Left lung (tissue), 14 donors: ENCODE measurements at regions of chr12 and their contacts with region 1.

Region 1: DNA sequence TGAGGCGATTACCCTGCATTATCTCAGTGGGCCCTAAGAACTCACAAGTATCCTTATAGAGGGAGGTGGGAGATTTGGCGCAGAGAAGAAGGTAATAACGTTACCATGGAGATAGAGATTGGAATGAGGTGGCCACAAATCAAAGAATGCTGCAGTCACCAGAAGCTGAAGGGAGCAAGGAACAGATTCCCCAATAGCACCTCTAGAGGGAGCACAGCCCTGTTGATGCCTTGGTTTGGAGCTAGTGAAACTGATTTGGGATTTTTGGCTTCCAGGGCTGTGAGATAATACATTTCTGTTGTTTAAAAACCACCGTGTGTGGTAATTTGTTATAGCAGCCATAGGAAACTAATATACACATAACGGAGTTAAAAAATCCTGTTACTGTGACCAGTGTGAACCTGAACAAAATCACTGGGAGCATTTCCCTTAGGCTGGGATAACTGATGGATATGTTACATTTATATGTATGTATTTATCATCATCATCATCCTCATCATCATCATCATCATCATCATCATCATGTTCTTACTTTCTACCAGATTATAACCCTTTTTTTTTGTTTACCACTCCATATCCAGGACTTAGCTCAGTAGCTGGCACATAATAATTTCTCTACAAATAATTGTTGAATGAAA is 100.3 kb downstream of the LIN7A start:
- DNase-seq: peak in 2 of 4 donors; percentile 28 to 61
- ATAC-seq: peak; percentile 87
- H3K4me3 ChIP-seq: no peak overlapping the region
- H3K27ac ChIP-seq: no peak overlapping the region
- H3K4me1 ChIP-seq: peaks cover 0 to 5% of the 10 kb centered on the region in 2 donors
- H3K27me3 ChIP-seq: no peaks in the 10 kb centered on the region
- CTCF ChIP-seq: peak; percentile 51 to 53

Region 2: GRCh38 chr12:80607361-80608135 is 229.9 kb before region 1 on chr12:
- intact Hi-C with region 1: no loop called
- DNase-seq: no peak
- ATAC-seq: no peak
- H3K4me3 ChIP-seq: no peak overlapping the region
- H3K27ac ChIP-seq: no peak overlapping the region
- H3K4me1 ChIP-seq: no peaks in the 10 kb centered on the region
- H3K27me3 ChIP-seq: no peaks in the 10 kb centered on the region
- CTCF ChIP-seq: no peak

Region 3: GRCh38 chr12:80925234-80925633 is 87.8 kb after region 1 on chr12:
- intact Hi-C with region 1: no loop called
- DNase-seq: no peak
- ATAC-seq: no peak
- H3K4me3 ChIP-seq: no peak overlapping the region
- H3K27ac ChIP-seq: no peak overlapping the region
- H3K4me1 ChIP-seq: no peaks in the 10 kb centered on the region
- H3K27me3 ChIP-seq: no peaks in the 10 kb centered on the region
- CTCF ChIP-seq: no peak

Region 4: DNA sequence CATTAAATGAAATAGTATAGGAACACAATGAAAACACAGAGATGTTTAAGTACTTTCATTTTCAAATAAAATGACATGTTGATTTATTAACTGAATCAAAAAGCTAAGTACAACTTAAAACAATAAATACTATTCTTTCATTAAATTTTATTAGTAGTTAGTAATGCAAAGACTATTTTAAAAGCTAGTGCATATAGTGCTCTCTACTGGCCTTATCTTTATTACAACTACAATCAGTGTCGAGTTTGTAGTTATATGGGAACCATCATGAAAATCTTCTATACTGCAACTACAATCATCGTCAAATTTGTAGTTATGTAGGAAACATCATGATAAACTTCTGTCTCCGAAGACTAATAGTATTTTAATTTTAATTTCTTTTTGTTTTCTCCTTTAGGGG is 109.1 kb after region 1 on chr12:
- intact Hi-C with region 1: loop called in 1 of 2 experiments (anchors 10 kb)
- DNase-seq: no peak
- ATAC-seq: no peak
- H3K4me3 ChIP-seq: no peak overlapping the region
- H3K27ac ChIP-seq: no peak overlapping the region
- H3K4me1 ChIP-seq: peaks cover 0 to 5% of the 10 kb centered on the region in 2 donors
- H3K27me3 ChIP-seq: no peaks in the 10 kb centered on the region
- CTCF ChIP-seq: no peak